B cell (primary cell): ENCODE measurements at regions of chr14 and their contacts with region 1.

Region 1: DNA sequence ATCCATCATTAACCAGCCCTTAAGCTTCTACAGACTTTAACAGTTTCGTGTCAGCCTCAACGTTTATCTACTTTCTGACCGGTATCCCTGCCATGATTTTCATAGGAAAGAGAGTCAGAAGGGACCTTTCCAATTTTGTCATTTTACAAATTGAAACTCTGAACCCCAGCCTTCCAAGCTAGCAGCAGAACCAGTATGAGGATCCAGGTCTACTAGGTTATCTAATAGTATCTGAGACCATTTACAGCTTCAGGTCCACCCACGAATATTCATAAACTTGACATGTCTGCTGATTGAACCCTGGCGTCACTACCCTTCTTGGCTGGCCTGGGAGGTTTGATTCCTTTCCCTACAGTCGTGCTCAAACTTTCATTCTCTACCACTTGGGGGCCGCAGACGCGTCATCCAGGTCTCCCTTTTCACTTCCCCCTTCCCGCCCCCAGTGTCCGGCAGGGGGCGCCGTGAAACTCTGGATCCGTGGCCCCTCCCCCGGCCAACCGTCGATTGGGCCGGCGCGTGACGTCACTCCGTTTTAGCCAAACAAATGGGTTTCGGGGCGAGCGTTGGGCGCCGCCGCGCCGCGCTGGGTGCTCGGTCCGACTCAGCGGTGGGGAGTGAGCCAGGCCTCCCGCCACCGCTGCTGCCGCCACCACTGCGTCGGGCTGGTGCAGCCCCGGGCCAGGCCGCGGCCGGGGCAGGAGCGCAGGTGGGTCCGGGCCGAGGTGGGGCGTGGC is at the start of gene FBXO34:
- DNase-seq: peak; percentile 99
- ATAC-seq: peak; percentile 90
- H3K4me3 ChIP-seq: peak within 1 kb of the TSS; percentile 83 to 98 (median 95)
- H3K4me3 Mint-ChIP-seq: peak within 1 kb of the TSS; percentile 92
- H3K27ac ChIP-seq: peak within 1 kb of the TSS; percentile 86 to 90
- H3K27ac Mint-ChIP-seq: peak within 1 kb of the TSS; percentile 93
- H3K4me1 ChIP-seq: peaks cover 12 to 14% of the 10 kb centered on the region in 2 donors
- H3K4me1 Mint-ChIP-seq: peaks cover 31% of the 10 kb centered on the region
- H3K27me3 ChIP-seq: no peaks in the 10 kb centered on the region
- H3K27me3 Mint-ChIP-seq: no peaks in the 10 kb centered on the region
- CTCF ChIP-seq: peak; percentile 99
- total RNA-seq, gene FBXO34: 27.5 and 33.4 TPM in 2 replicates

Region 2: DNA sequence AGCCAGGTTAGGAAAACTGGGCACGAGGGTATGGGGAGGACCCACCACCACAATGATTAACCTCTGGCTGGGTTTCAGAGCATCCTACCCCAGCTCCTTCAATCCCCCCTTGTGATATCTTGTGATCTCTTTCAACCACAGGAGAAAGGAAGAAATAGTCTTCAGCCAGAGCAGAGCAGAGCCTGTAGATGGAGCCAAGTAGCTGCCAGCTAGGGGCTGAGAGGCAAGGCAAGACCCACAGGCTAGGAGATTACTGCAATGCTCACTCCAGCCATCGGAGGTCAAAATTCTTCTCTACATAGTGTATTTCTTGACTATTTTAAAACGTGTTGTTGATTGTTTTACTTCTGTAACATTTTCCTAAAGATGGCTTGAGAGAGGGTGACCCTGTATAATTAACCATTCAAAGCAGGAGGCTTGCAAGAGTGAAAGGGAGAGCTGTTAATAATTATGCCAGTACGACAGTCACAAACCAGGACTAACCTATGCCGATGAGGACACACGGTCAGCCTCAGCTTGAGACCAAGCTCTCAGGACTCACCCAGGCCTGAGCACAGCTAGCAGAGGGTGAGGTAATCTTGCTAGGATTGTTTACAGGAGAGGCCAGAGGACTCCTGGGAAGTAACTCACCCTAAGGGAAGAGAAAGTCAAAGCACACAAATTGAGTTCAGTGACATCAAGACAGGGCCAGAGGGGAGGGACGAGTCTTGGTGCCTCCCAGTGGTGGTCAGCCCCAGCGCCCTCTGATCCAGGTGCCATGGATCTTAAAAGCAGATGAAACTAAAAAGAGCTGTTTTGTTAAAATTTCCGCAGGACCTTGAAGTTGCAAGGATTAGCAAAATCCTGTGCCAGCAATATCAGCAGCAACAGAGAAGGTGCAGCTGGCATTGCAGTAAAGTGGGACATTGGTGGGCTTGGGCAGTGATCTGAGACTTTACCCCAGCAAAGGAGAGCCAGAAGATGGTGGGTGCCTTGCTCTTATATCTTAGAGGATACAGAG is 904.0 kb before region 1 on chr14:
- CTCF ChIA-PET with region 1: no interaction called
- POLR2A ChIA-PET with region 1: no interaction called
- intact Hi-C with region 1: no loop called
- DNase-seq: peak; percentile 36
- ATAC-seq: peak; percentile 85
- H3K4me3 ChIP-seq: no peak overlapping the region
- H3K4me3 Mint-ChIP-seq: no peak overlapping the region
- H3K27ac ChIP-seq: no peak overlapping the region
- H3K27ac Mint-ChIP-seq: no peak overlapping the region
- H3K4me1 ChIP-seq: no peaks in the 10 kb centered on the region
- H3K4me1 Mint-ChIP-seq: peaks cover 1% of the 10 kb centered on the region
- H3K27me3 ChIP-seq: no peaks in the 10 kb centered on the region
- H3K27me3 Mint-ChIP-seq: peaks cover 25% of the 10 kb centered on the region
- CTCF ChIP-seq: peak; percentile 45

Region 3: GRCh38 chr14:54902521-54903420 is 368.2 kb before region 1 on chr14 and contains the start of gene GCH1:
- CTCF ChIA-PET with region 1: no interaction called
- POLR2A ChIA-PET with region 1: no interaction called
- intact Hi-C with region 1: loop called (anchors 2 kb)
- DNase-seq: peak; percentile 92
- ATAC-seq: peak; percentile 87
- H3K4me3 ChIP-seq: peak within 1 kb of the TSS; percentile 50 to 92 (median 83)
- H3K4me3 Mint-ChIP-seq: peak within 1 kb of the TSS; percentile 91
- H3K27ac ChIP-seq: peak within 1 kb of the TSS; percentile 83 to 90
- H3K27ac Mint-ChIP-seq: peak within 1 kb of the TSS; percentile 92
- H3K4me1 ChIP-seq: peaks cover 9 to 16% of the 10 kb centered on the region in 2 donors
- H3K4me1 Mint-ChIP-seq: peaks cover 18% of the 10 kb centered on the region
- H3K27me3 ChIP-seq: no peaks in the 10 kb centered on the region
- H3K27me3 Mint-ChIP-seq: no peaks in the 10 kb centered on the region
- CTCF ChIP-seq: peak; percentile 85
- total RNA-seq, gene GCH1: 23.7 and 24.6 TPM in 2 replicates

Region 4: GRCh38 chr14:55051426-55052268 is 219.4 kb before region 1 on chr14 and contains the start of gene MAPK1IP1L:
- CTCF ChIA-PET with region 1: interaction called, 3 read pairs
- POLR2A ChIA-PET with region 1: no interaction called
- intact Hi-C with region 1: loop called (anchors 1 kb)
- DNase-seq: peak; percentile 95
- ATAC-seq: peak; percentile 93
- H3K4me3 ChIP-seq: peak within 1 kb of the TSS; percentile 69 to 99 (median 97)
- H3K4me3 Mint-ChIP-seq: peak within 1 kb of the TSS; percentile 93
- H3K27ac ChIP-seq: peak within 1 kb of the TSS; percentile 100
- H3K27ac Mint-ChIP-seq: peak within 1 kb of the TSS; percentile 95
- H3K4me1 ChIP-seq: peaks cover 18 to 25% of the 10 kb centered on the region in 2 donors
- H3K4me1 Mint-ChIP-seq: peaks cover 39% of the 10 kb centered on the region
- H3K27me3 ChIP-seq: no peaks in the 10 kb centered on the region
- H3K27me3 Mint-ChIP-seq: no peaks in the 10 kb centered on the region
- CTCF ChIP-seq: peak; percentile 99
- total RNA-seq, gene MAPK1IP1L: 108 and 116 TPM in 2 replicates

Region 5: GRCh38 chr14:55191203-55192053 is 79.6 kb before region 1 on chr14 and contains the start of gene DLGAP5:
- CTCF ChIA-PET with region 1: interaction called, 4 read pairs
- POLR2A ChIA-PET with region 1: no interaction called
- intact Hi-C with region 1: loop called (anchors 1 kb)
- DNase-seq: peak; percentile 91
- ATAC-seq: peak; percentile 98
- H3K4me3 ChIP-seq: peak within 1 kb of the TSS; percentile 38 to 72 (median 68)
- H3K4me3 Mint-ChIP-seq: peak within 1 kb of the TSS; percentile 89
- H3K27ac ChIP-seq: peak within 1 kb of the TSS in 1 of 2 donors; percentile 68
- H3K27ac Mint-ChIP-seq: peak within 1 kb of the TSS; percentile 42
- H3K4me1 ChIP-seq: peaks cover 9 to 13% of the 10 kb centered on the region in 2 donors
- H3K4me1 Mint-ChIP-seq: peaks cover 14% of the 10 kb centered on the region
- H3K27me3 ChIP-seq: no peaks in the 10 kb centered on the region
- H3K27me3 Mint-ChIP-seq: no peaks in the 10 kb centered on the region
- CTCF ChIP-seq: no peak
- total RNA-seq, gene DLGAP5: not detected in 2 replicates

Region 6: DNA sequence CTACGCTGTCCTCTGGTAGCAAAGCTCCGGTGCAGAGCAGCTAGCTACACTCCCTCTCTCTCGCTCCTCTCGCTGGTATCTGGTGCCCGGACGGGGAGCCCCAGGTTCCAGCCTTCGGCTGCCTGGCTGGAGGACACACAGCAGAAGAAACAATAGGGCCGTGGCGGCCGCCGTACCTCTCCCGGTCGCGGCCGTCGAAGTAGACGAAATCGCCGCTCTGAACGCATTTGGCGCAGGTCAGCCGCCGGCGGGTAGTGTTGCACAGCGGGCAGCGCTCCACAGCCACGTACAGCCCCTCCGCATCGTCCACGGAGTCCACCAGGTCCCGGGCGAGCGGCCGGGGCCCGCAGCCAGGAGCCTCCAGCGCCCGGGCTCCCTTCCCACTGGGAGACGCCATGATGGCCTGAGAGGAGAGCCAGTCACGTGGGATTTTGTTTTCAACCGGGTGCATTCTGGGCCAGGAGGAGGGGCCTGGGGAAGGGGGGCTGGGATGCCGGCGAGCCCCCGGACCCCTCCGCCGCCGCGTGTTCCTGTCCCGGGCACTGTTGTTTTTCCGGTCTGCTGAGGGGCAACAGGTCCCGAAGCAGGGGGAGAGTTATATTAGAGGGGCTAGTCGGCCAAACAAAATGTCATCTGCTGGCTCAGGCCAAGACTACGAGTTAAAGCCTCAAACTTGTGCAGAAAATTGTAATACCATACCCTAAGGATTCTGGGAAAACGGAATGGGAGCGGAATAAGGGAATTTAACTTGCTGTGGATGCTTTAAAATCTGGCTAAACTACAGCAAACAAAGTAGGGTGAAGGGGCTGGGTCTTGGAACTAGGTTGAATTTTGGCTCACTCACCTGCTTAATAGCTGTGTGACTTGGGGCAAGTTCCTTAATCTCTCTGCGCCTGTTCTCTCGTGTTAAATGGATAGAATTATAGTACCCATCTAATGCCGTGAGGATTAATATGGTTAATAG is 140.7 kb after region 1 on chr14 and contains the start of gene ATG14:
- CTCF ChIA-PET with region 1: no interaction called
- POLR2A ChIA-PET with region 1: no interaction called
- intact Hi-C with region 1: loop called (anchors 1 kb)
- DNase-seq: peak; percentile 81
- ATAC-seq: peak; percentile 99
- H3K4me3 ChIP-seq: peak within 1 kb of the TSS; percentile 62 to 95 (median 93)
- H3K4me3 Mint-ChIP-seq: peak within 1 kb of the TSS; percentile 93
- H3K27ac ChIP-seq: peak within 1 kb of the TSS; percentile 49 to 87
- H3K27ac Mint-ChIP-seq: peak within 1 kb of the TSS; percentile 87
- H3K4me1 ChIP-seq: peaks cover 16 to 17% of the 10 kb centered on the region in 2 donors
- H3K4me1 Mint-ChIP-seq: peaks cover 35% of the 10 kb centered on the region
- H3K27me3 ChIP-seq: no peaks in the 10 kb centered on the region
- H3K27me3 Mint-ChIP-seq: peaks cover 19% of the 10 kb centered on the region
- CTCF ChIP-seq: no peak
- total RNA-seq, gene ATG14: 15.5 and 17.0 TPM in 2 replicates

Region 7: GRCh38 chr14:56117765-56118610 is 847.0 kb after region 1 on chr14 and contains the start of gene PELI2:
- CTCF ChIA-PET with region 1: no interaction called
- POLR2A ChIA-PET with region 1: no interaction called
- intact Hi-C with region 1: loop called (anchors 5 kb)
- DNase-seq: peak; percentile 93
- ATAC-seq: peak; percentile 89
- H3K4me3 ChIP-seq: peak within 1 kb of the TSS; percentile 60 to 93 (median 83)
- H3K4me3 Mint-ChIP-seq: peak within 1 kb of the TSS; percentile 96
- H3K27ac ChIP-seq: peak within 1 kb of the TSS; percentile 68 to 94
- H3K27ac Mint-ChIP-seq: peak within 1 kb of the TSS; percentile 98
- H3K4me1 ChIP-seq: peaks cover 18 to 31% of the 10 kb centered on the region in 2 donors
- H3K4me1 Mint-ChIP-seq: peaks cover 55% of the 10 kb centered on the region
- H3K27me3 ChIP-seq: peaks cover 0 to 4% (median 0%) of the 10 kb centered on the region in 4 experiments
- H3K27me3 Mint-ChIP-seq: peaks cover 3% of the 10 kb centered on the region
- CTCF ChIP-seq: no peak
- total RNA-seq, gene PELI2: 13.4 and 18.9 TPM in 2 replicates